GM18951 (cell line): ENCODE measurements at regions of chr1 and their contacts with region 1.

Region 1: GRCh38 chr1:33045246-33045645 is 8.6 kb upstream of the AK2 start:
- POLR2A ChIP-seq: no peak

Region 2: DNA sequence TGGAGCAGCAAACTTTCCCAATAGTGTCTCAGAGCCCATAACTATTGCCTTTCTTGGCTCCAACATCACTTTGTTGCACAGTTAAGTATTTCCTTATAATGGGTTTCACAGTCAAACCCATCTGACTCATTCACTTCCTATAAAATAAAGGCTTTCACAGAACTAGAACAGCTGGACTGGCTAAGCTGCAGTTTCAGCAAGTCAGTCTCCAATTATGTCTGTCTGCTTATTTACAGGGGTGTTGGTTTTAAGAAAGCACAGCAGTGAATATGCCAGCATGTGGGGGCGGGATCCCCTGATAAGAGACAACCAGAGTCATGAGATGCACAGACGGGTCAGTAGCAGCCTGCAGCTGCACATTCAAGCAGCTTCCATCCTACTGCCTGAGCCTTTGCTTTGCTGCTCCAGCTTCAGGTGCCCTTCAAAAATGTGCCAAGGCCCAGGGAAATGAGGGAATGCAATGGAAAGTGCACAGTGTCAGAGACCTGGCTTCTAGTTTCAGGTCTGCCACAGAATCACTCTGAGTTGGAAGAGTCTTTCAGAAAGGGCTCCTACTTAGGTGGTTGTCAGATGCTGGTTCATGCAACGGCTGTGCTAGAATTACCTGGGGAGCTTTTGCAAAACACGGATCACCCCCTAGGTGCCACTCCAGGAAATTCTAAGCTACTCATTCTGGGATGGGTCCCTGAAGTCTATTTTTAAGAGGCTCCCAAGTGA is 105.4 kb before region 1 on chr1:
- in situ Hi-C with region 1: loop called (anchors 10 kb)
- POLR2A ChIP-seq: no peak

Region 3: DNA sequence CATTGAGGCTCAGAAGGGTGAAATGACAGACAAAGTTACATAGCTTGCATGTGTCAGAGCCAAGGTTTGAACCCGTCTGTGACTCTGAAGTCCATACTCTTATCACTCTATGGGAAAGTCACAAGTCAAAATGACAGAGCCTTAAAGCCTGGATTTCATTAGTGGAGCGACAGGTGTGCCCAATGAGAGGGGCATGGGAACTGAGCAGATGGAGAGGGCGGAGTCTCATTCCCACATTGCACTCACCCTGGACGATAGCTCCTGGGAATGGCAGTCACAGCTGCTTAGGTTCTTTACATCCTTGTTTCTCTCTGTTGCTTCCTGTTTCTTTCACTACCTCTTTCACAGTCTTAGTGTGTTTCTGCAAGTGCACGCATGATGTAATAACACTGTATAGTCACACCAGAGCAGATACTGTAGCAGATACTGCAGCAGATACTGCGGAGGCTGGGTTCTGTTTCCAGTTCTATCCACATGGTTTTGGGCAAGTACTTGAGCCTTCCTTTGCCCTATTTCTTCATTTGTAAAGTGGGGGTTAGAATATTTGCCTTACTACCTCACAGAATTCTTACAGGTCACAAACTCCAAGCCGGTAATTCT is 554.4 kb after region 1 on chr1:
- in situ Hi-C with region 1: no loop called
- POLR2A ChIP-seq: no peak